CD4-positive, alpha-beta memory T cell (primary cell): ENCODE measurements at regions of chr3 and their contacts with region 1.

Region 1: DNA sequence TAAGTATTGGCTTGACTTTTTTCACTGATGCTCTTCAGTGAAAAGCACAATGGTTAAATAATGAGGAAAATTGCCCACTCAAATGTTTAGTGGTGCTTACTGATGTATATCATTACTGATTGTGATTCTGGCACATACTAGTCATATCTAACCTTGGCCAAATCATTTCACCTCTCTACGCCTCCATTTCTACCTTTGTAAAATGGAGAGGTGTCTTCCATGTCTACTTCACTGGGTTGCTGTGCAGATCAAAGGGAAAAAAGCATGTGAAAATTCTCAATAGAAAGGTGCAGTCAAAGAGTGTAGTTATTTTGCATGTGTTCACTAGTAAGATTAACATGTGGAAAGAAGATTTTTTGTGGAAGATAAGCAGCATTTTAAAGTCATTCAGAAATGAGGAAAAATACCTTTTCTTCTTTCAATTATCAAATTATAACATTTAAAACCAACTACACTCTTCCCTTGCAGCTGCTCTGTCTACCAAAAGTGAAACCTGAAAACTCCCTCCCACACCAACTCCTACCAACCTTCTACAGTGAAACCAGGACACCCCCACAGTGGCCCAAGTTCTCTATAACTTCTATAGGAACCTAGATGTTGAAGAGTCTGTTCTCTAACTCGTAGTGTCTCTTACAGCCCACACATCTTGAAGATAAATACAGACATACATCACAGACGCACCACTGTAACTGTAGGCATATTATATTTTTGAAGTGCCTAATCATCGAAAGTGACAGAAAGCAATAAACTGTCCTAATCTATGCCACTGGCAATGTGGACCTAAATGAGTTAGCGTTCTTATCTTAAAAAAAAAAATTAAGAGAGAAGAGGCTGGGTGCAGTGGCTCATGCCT is 1.4 kb downstream of the CD200R1 start:
- DNase-seq: peak; percentile 47 to 69 (median 52)
- H3K4me3 ChIP-seq: peak overlapping the region; percentile 64 to 66
- H3K4me3 Mint-ChIP-seq: peak overlapping the region; percentile 88 to 98 (median 94)
- H3K27ac ChIP-seq: peak overlapping the region; percentile 65
- H3K27ac Mint-ChIP-seq: peak overlapping the region; percentile 88 to 98 (median 93)
- H3K4me1 ChIP-seq: peaks cover 65% of the 10 kb centered on the region
- H3K4me1 Mint-ChIP-seq: peaks cover 60 to 95% (median 71%) of the 10 kb centered on the region in 4 donors
- H3K27me3 ChIP-seq: no peaks in the 10 kb centered on the region
- H3K27me3 Mint-ChIP-seq: no peaks in the 10 kb centered on the region

Region 2: GRCh38 chr3:112814266-112814665 is 159.3 kb before region 1 on chr3:
- CTCF ChIA-PET with region 1: interaction called, 11 read pairs
- POLR2A ChIA-PET with region 1: no interaction called
- intact Hi-C with region 1: loop called (anchors 2 kb)
- DNase-seq: peak in 2 of 5 donors; percentile 9 to 13
- H3K4me3 ChIP-seq: no peak overlapping the region
- H3K4me3 Mint-ChIP-seq: peak overlapping the region in 1 of 8 donors; percentile 61
- H3K27ac ChIP-seq: no peak overlapping the region
- H3K27ac Mint-ChIP-seq: peak overlapping the region in 1 of 7 donors; percentile 68
- H3K4me1 ChIP-seq: peaks cover 27% of the 10 kb centered on the region
- H3K4me1 Mint-ChIP-seq: peaks cover 18 to 44% (median 32%) of the 10 kb centered on the region in 4 donors
- H3K27me3 ChIP-seq: no peaks in the 10 kb centered on the region
- H3K27me3 Mint-ChIP-seq: no peaks in the 10 kb centered on the region

Region 3: DNA sequence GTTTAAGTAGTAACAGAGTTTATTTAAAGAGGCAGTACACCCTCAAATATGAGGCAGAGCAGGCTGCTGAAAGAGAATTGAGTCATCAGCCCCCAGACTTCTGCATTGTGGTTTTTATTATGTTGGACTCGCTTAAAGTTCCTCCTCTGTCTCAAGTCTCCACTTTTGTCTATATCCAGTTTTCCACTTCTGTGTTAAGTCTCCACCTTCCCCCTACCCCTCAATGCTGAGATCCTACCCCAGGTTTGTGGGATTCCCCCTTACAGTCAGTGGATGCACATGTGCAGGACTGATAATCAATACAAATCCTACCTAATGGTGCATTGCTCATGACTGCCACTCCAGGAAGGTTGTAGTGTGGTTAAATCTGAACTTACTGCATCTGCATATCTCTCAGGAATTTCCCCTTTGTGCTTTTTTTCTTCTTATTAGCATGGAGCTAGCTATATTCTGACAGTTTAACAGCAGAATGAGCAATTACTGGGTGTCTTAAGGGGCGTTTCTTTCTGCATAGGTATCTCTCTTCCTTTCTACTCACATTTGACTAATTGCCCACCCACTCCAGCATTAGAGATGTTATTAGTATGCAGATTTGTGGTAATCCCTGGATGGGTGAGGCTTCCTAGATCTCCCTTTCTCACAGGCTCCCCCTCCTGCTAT is 115.0 kb before region 1 on chr3:
- CTCF ChIA-PET with region 1: interaction called, 3 read pairs
- POLR2A ChIA-PET with region 1: no interaction called
- intact Hi-C with region 1: loop called (anchors 5 kb)
- DNase-seq: peak in 2 of 5 donors; percentile 9 to 66
- H3K4me3 ChIP-seq: no peak overlapping the region
- H3K4me3 Mint-ChIP-seq: peak overlapping the region in 7 of 8 donors; percentile 22 to 80 (median 49)
- H3K27ac ChIP-seq: peak overlapping the region; percentile 5
- H3K27ac Mint-ChIP-seq: peak overlapping the region; percentile 43 to 89 (median 56)
- H3K4me1 ChIP-seq: peaks cover 39% of the 10 kb centered on the region
- H3K4me1 Mint-ChIP-seq: peaks cover 25 to 59% (median 33%) of the 10 kb centered on the region in 4 donors
- H3K27me3 ChIP-seq: no peaks in the 10 kb centered on the region
- H3K27me3 Mint-ChIP-seq: no peaks in the 10 kb centered on the region

Region 4: DNA sequence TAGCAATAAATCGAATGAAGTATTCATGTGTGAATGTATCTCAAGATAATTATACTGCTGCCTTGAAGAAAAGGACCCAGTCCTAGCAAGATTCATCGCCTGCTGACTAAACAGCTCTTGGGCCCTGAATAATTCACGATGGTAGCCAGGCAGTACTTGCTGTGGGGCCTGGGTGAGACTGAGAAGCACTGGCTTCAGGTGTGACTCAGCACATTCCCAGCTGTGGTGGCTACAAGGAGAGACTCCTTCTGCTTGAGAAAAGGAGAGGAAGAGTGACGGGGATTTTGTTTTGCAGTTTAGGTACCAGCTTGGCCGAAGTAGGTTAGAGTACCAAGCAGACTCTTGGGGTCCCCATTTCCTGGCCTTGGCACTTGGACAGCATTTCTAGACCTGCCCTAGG is 79.3 kb before region 1 on chr3:
- CTCF ChIA-PET with region 1: no interaction called
- POLR2A ChIA-PET with region 1: no interaction called
- intact Hi-C with region 1: no loop called
- DNase-seq: no peak
- H3K4me3 ChIP-seq: no peak overlapping the region
- H3K4me3 Mint-ChIP-seq: no peak overlapping the region
- H3K27ac ChIP-seq: no peak overlapping the region
- H3K27ac Mint-ChIP-seq: no peak overlapping the region
- H3K4me1 ChIP-seq: no peaks in the 10 kb centered on the region
- H3K4me1 Mint-ChIP-seq: no peaks in the 10 kb centered on the region
- H3K27me3 ChIP-seq: no peaks in the 10 kb centered on the region
- H3K27me3 Mint-ChIP-seq: no peaks in the 10 kb centered on the region

Region 5: GRCh38 chr3:112958811-112959560 is 14.6 kb before region 1 on chr3:
- CTCF ChIA-PET with region 1: interaction called, 4 read pairs
- POLR2A ChIA-PET with region 1: interaction called, 5 read pairs
- intact Hi-C with region 1: loop called (anchors 2 kb)
- DNase-seq: peak in 1 of 5 donors; percentile 15
- H3K4me3 ChIP-seq: peak overlapping the region; percentile 13 to 17
- H3K4me3 Mint-ChIP-seq: peak overlapping the region; percentile 74 to 92 (median 83)
- H3K27ac ChIP-seq: peak overlapping the region; percentile 29
- H3K27ac Mint-ChIP-seq: peak overlapping the region; percentile 10 to 91 (median 73)
- H3K4me1 ChIP-seq: peaks cover 29% of the 10 kb centered on the region
- H3K4me1 Mint-ChIP-seq: peaks cover 30 to 60% (median 43%) of the 10 kb centered on the region in 4 donors
- H3K27me3 ChIP-seq: no peaks in the 10 kb centered on the region
- H3K27me3 Mint-ChIP-seq: no peaks in the 10 kb centered on the region

Region 6: GRCh38 chr3:112984485-112984884 is 10.9 kb after region 1 on chr3:
- CTCF ChIA-PET with region 1: interaction called, 24 read pairs
- POLR2A ChIA-PET with region 1: interaction called, 25 read pairs
- intact Hi-C with region 1: loop called (anchors 1 kb)
- DNase-seq: peak; percentile 47 to 84 (median 54)
- H3K4me3 ChIP-seq: no peak overlapping the region
- H3K4me3 Mint-ChIP-seq: peak overlapping the region in 4 of 8 donors; percentile 7 to 45 (median 32)
- H3K27ac ChIP-seq: peak overlapping the region; percentile 1
- H3K27ac Mint-ChIP-seq: peak overlapping the region; percentile 53 to 95 (median 77)
- H3K4me1 ChIP-seq: peaks cover 39% of the 10 kb centered on the region
- H3K4me1 Mint-ChIP-seq: peaks cover 37 to 65% (median 51%) of the 10 kb centered on the region in 4 donors
- H3K27me3 ChIP-seq: no peaks in the 10 kb centered on the region
- H3K27me3 Mint-ChIP-seq: no peaks in the 10 kb centered on the region

Region 7: GRCh38 chr3:112990672-112991602 is 17.4 kb after region 1 on chr3 and contains the start of gene GTPBP8:
- CTCF ChIA-PET with region 1: interaction called, 15 read pairs
- POLR2A ChIA-PET with region 1: interaction called, 25 read pairs
- intact Hi-C with region 1: no loop called
- DNase-seq: peak; percentile 79 to 88 (median 81)
- H3K4me3 ChIP-seq: peak within 1 kb of the TSS; percentile 73 to 91
- H3K4me3 Mint-ChIP-seq: peak within 1 kb of the TSS; percentile 95 to 98 (median 96)
- H3K27ac ChIP-seq: peak within 1 kb of the TSS; percentile 78
- H3K27ac Mint-ChIP-seq: peak within 1 kb of the TSS; percentile 94 to 98 (median 96)
- H3K4me1 ChIP-seq: peaks cover 49% of the 10 kb centered on the region
- H3K4me1 Mint-ChIP-seq: peaks cover 51 to 80% (median 62%) of the 10 kb centered on the region in 4 donors
- H3K27me3 ChIP-seq: no peaks in the 10 kb centered on the region
- H3K27me3 Mint-ChIP-seq: no peaks in the 10 kb centered on the region
- total RNA-seq, gene GTPBP8: 36.0 to 40.0 TPM